Cardiac septum (tissue), 1 donor: ENCODE measurements at regions of chr17 and their contacts with region 1.

Region 1: GRCh38 chr17:30906101-30906911 is at the start of gene TEFM:
- DNase-seq: peak; percentile 96
- total RNA-seq, gene TEFM: 12.0 TPM

Region 2: GRCh38 chr17:30808785-30809286 is 97.5 kb before region 1 on chr17:
- intact Hi-C with region 1: no loop called
- DNase-seq: no peak

Region 3: DNA sequence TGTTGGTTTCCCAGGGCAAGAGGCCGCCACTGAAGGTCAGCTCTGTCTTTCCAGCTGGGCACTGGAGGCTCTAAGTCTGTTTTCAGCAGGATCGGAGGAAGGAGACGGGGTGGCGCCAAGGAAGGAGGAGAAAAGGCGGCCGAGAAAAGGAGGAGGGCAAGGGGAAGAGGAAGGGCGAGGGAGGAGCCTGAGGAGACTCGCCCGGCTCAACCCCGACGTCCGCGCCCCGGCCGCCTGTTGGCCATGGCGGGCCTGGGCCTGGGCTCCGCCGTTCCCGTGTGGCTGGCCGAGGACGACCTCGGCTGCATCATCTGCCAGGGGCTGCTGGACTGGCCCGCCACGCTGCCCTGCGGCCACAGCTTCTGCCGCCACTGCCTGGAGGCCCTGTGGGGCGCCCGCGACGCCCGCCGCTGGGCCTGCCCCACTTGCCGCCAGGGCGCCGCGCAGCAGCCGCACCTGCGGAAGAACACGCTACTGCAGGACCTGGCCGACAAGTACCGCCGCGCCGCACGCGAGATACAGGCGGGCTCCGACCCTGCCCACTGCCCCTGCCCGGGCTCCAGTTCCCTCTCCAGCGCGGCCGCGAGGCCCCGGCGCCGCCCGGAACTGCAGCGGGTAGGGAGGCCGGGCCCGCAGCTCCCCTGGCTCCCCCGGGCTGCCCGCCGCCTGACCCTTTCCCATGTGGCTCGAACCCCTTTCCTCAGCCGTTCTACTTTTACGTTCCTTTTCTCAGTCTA is 64.7 kb after region 1 on chr17 and contains the start of gene RNF135:
- intact Hi-C with region 1: loop called (anchors 5 kb)
- DNase-seq: peak; percentile 93
- total RNA-seq, gene RNF135: 4.8 TPM